ENCODE measurements at regions of chr12 and their contacts with region 1.

Region 1: DNA sequence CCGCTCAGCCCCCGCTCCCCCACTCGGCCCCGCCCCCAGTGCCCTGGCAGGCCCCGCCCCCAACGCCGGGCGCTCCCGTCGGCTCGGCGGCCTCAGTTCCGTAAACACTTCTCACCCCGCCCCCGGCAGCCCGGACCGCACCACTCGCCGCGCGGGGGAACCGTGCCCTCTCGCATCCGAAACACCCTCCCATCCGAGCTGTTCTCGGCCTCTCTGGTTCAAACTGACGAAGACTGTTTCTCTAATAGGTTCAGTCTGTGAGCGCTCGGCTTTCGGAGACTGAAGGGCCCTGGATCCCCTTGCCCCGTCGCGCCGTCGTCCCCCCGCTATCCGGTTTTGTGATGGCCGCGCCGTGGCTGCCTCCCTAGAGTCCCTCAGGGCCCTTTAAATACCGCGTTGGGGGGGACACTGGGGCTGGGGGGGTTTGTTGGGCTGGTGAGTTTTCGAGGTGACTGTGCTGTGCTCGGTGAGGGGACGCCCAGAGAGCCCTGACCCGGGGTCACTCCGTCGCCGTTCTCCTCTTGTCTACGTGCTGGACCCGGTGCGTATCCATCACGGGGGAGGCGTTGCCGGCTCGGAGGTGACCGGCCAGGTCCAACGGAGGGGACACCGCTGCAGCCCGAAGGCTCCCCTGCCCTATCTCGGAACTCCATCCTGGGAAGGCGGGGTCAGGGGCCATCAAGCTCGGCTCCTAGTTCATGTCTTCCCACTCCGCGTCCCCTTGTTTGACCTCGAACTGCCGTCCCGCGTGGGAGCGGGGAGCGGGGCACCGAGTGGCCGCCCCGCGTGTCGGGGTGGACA is at the start of gene TCP11L2:
- DNase-seq: peak; percentile 77
- ATAC-seq: peak; percentile 59
- H3K4me3 ChIP-seq: peak within 1 kb of the TSS; percentile 80
- H3K27ac ChIP-seq: peak within 1 kb of the TSS; percentile 84
- H3K4me1 ChIP-seq: peaks cover 42% of the 10 kb centered on the region
- H3K27me3 ChIP-seq: no peaks in the 10 kb centered on the region
- CTCF ChIP-seq: no peak
- total RNA-seq, gene TCP11L2: 10.1 and 12.1 TPM in 2 replicates

Region 2: GRCh38 chr12:106288494-106289195 is 14.0 kb before region 1 on chr12:
- CTCF ChIA-PET with region 1: no interaction called
- POLR2A ChIA-PET with region 1: interaction called, 6 read pairs
- intact Hi-C with region 1: loop called (anchors 1 kb)
- DNase-seq: peak; percentile 97
- ATAC-seq: peak; percentile 92
- H3K4me3 ChIP-seq: no peak overlapping the region
- H3K27ac ChIP-seq: peak overlapping the region; percentile 96
- H3K4me1 ChIP-seq: peaks cover 50% of the 10 kb centered on the region
- H3K27me3 ChIP-seq: no peaks in the 10 kb centered on the region
- CTCF ChIP-seq: no peak

Region 3: GRCh38 chr12:106317406-106318082 is 14.9 kb after region 1 on chr12:
- CTCF ChIA-PET with region 1: no interaction called
- POLR2A ChIA-PET with region 1: no interaction called
- intact Hi-C with region 1: no loop called
- DNase-seq: peak; percentile 29
- ATAC-seq: no peak; the same call in 1 of the 2 replicates
- H3K4me3 ChIP-seq: no peak overlapping the region
- H3K27ac ChIP-seq: no peak overlapping the region
- H3K4me1 ChIP-seq: no peaks in the 10 kb centered on the region
- H3K27me3 ChIP-seq: no peaks in the 10 kb centered on the region
- CTCF ChIP-seq: no peak

Region 4: DNA sequence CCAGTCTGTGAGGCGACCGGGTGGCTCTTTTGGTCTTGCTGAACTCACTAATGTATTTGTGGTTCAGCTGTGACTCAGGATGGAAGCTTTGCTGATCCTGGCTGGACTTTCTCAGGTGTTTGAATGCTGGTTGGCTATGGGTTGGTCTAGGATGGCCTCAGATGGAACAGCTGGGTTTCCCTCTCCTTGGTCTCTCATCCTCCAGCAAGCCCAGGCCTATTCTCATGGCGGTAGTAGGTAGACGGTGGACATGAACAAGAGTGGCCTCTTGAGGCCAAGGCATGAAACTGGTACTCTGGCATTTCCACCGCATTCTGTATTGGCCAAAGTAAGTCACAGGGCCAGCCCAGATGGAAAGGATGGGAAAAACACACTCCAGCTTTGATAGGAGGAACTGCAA is 43.1 kb after region 1 on chr12:
- CTCF ChIA-PET with region 1: no interaction called
- POLR2A ChIA-PET with region 1: no interaction called
- intact Hi-C with region 1: loop called (anchors 1 kb)
- DNase-seq: peak; percentile 76
- ATAC-seq: peak; percentile 54
- H3K4me3 ChIP-seq: no peak overlapping the region
- H3K27ac ChIP-seq: no peak overlapping the region
- H3K4me1 ChIP-seq: peaks cover 15% of the 10 kb centered on the region
- H3K27me3 ChIP-seq: no peaks in the 10 kb centered on the region
- CTCF ChIP-seq: peak; percentile 75

Measured in PC-3 (cell line).